PC-9 (cell line): ENCODE measurements at regions of chr9 and their contacts with region 1.

Region 1: GRCh38 chr9:93319992-93320500 is 131.4 kb upstream of the FAM120A start:
- DNase-seq: no peak
- H3K4me3 ChIP-seq: no peak overlapping the region
- H3K27ac ChIP-seq: no peak overlapping the region
- H3K4me1 ChIP-seq: no peaks in the 10 kb centered on the region
- H3K27me3 ChIP-seq: no peaks in the 10 kb centered on the region
- CTCF ChIP-seq: no peak

Region 2: GRCh38 chr9:93436655-93437442 is 116.8 kb after region 1 on chr9:
- CTCF ChIA-PET with region 1: no interaction called
- POLR2A ChIA-PET with region 1: interaction called, 12 read pairs
- intact Hi-C with region 1: no loop called
- DNase-seq: no peak
- H3K4me3 ChIP-seq: no peak overlapping the region
- H3K27ac ChIP-seq: no peak overlapping the region
- H3K4me1 ChIP-seq: no peaks in the 10 kb centered on the region
- H3K27me3 ChIP-seq: no peaks in the 10 kb centered on the region
- CTCF ChIP-seq: no peak

Region 3: DNA sequence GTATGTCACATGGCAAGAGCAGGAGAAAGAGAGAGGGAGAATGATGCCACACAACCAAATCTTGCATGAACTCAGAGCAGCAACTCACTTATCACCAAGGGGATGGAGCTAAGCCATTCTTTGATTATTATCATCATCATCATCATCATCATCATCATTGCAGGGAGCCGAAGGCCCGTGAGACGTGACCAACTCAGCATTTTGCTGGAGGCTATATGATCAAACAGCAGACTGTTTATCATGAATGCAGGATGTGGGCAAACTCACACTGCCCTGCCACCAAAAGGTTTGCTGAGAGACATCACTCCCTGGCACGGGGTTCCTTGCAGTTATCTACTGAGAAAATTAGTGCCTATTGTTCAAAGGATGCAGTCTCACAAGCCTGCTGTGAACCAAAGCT is 930.4 kb after region 1 on chr9:
- CTCF ChIA-PET with region 1: no interaction called
- POLR2A ChIA-PET with region 1: no interaction called
- intact Hi-C with region 1: no loop called
- DNase-seq: no peak
- H3K4me3 ChIP-seq: no peak overlapping the region
- H3K27ac ChIP-seq: no peak overlapping the region
- H3K4me1 ChIP-seq: no peaks in the 10 kb centered on the region
- H3K27me3 ChIP-seq: no peaks in the 10 kb centered on the region
- CTCF ChIP-seq: no peak